ENCODE measurements at regions of chr15 and their contacts with region 1.

Region 1: DNA sequence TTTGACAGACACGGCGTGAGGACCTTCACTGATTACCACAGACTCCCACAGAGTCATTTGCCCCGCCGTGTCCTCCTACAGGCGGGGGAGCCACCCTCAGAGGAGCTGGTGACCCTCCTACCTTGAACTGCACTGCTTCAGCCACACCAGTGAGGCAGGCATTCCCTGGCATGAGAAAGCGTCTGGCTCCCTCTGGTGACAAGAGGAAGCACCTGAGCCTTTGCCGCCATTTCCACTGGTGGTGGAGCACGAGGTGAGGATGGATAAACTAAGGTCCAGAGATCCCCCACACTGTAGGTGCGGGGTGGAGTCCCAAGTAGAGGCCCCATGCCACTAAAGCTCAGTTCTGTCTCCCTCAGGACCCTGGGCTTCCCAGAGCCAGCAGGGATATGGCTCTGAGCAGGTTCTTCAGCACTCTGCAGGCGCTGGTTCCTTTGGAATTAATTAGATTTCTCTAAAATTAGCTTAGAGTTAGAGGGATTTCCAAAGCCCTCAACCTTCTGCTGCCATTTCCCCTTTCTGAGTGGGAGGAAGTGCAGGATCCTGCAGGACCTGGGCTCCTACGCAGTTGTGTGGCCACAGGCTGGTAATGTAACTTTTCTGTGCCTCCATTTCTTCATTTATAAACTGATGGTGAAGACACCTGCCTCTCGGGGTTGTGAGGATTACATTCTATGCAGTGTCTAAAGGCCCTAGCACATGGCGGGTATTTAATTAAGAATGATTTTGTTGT is 224.0 kb downstream of the SLCO3A1 start:
- DNase-seq: peak; percentile 69
- H3K4me3 Mint-ChIP-seq: no peak overlapping the region
- H3K27ac Mint-ChIP-seq: no peak overlapping the region
- H3K4me1 Mint-ChIP-seq: peaks cover 38% of the 10 kb centered on the region
- H3K27me3 Mint-ChIP-seq: no peaks in the 10 kb centered on the region

Region 2: GRCh38 chr15:91302588-91303439 is 774.7 kb before region 1 on chr15:
- CTCF ChIA-PET with region 1: interaction called, 11 read pairs
- POLR2A ChIA-PET with region 1: no interaction called
- DNase-seq: no peak
- H3K4me3 Mint-ChIP-seq: no peak overlapping the region
- H3K27ac Mint-ChIP-seq: no peak overlapping the region
- H3K4me1 Mint-ChIP-seq: peaks cover 10% of the 10 kb centered on the region
- H3K27me3 Mint-ChIP-seq: peaks cover 52% of the 10 kb centered on the region

Region 3: DNA sequence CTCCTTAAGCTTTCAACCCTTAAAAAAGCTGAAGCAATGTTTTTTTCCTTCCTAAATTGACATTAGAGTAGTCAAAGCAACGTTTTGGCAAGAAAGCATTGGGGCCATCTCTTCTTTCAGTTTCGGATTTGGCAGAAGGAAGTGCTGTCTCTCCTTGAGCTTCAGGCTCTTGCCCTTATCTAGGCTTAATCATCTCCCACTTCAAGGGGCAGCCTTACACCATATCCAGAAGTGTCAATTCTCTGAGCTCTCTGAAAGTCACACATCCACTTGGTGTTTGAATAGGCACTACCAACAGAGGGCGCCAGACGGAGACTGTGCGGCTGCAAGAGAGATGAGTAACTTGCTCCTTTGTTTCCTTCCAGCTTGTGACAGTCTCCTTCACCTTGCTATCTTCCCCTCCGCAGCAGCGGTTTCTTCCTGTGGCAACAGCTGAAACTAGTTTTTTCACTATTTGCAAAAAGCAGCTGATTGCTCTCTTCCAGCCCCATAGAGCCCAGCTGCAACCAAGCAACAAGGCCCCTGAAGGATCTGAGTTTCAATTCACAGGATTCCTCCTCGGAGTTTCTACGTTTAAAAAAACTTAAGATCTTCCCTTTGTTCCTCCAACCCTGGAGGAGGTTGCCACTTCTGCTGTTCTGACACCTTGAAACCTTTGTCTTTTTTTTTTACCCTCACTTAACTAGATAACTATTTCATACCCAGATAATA is 371.0 kb before region 1 on chr15:
- CTCF ChIA-PET with region 1: interaction called, 41 read pairs
- POLR2A ChIA-PET with region 1: interaction called, 4 read pairs
- DNase-seq: peak; percentile 89
- H3K4me3 Mint-ChIP-seq: no peak overlapping the region
- H3K27ac Mint-ChIP-seq: peak overlapping the region; percentile 58
- H3K4me1 Mint-ChIP-seq: peaks cover 17% of the 10 kb centered on the region
- H3K27me3 Mint-ChIP-seq: peaks cover 9% of the 10 kb centered on the region

Region 4: GRCh38 chr15:91852741-91853510 is 224.6 kb before region 1 on chr15:
- CTCF ChIA-PET with region 1: interaction called, 17 read pairs
- POLR2A ChIA-PET with region 1: interaction called, 5 read pairs
- DNase-seq: peak; percentile 77
- H3K4me3 Mint-ChIP-seq: peak overlapping the region; percentile 83
- H3K27ac Mint-ChIP-seq: peak overlapping the region; percentile 87
- H3K4me1 Mint-ChIP-seq: peaks cover 59% of the 10 kb centered on the region
- H3K27me3 Mint-ChIP-seq: no peaks in the 10 kb centered on the region

Region 5: GRCh38 chr15:92091155-92091734 is 13.7 kb after region 1 on chr15:
- CTCF ChIA-PET with region 1: interaction called, 16 read pairs
- POLR2A ChIA-PET with region 1: no interaction called
- DNase-seq: no peak
- H3K4me3 Mint-ChIP-seq: no peak overlapping the region
- H3K27ac Mint-ChIP-seq: no peak overlapping the region
- H3K4me1 Mint-ChIP-seq: peaks cover 22% of the 10 kb centered on the region
- H3K27me3 Mint-ChIP-seq: no peaks in the 10 kb centered on the region

Region 6: GRCh38 chr15:92097474-92098178 is 20.1 kb after region 1 on chr15:
- CTCF ChIA-PET with region 1: interaction called, 16 read pairs
- POLR2A ChIA-PET with region 1: no interaction called
- DNase-seq: peak; percentile 52
- H3K4me3 Mint-ChIP-seq: no peak overlapping the region
- H3K27ac Mint-ChIP-seq: peak overlapping the region; percentile 36
- H3K4me1 Mint-ChIP-seq: peaks cover 58% of the 10 kb centered on the region
- H3K27me3 Mint-ChIP-seq: no peaks in the 10 kb centered on the region